T-cell (primary cell): ENCODE measurements at regions of chr12 and their contacts with region 1.

Region 1: DNA sequence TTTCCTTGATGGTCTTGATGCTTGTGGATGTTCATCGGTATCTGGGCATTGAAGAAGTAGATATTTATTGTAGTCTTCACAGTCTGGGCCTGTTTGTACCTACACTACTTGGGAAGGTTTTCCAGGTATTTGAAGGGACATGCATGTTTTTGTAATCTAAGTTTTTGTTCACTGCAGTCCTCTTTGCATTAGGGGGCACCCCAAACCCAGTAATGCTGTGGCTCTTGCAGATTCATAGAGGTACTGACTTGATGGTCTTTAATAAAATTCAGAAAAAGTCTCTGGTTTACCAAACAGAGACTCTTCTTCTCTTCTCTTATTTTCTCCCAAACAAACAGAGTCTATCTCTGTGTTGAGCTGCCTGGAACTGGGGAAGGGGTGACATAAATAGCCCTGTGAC is 150.9 kb upstream of the SLC16A7 start:
- DNase-seq: peak in 17 of 35 experiments; percentile 2 to 43 (median 10)
- ATAC-seq: no peak
- H3K4me3 ChIP-seq: no peak overlapping the region
- H3K4me3 Mint-ChIP-seq: no peak overlapping the region
- H3K27ac ChIP-seq: no peak overlapping the region
- H3K27ac Mint-ChIP-seq: no peak overlapping the region
- H3K4me1 ChIP-seq: no peaks in the 10 kb centered on the region
- H3K4me1 Mint-ChIP-seq: no peaks in the 10 kb centered on the region
- H3K27me3 ChIP-seq: no peaks in the 10 kb centered on the region
- H3K27me3 Mint-ChIP-seq: peaks cover 1 to 10% of the 10 kb centered on the region in 2 donors

Region 2: DNA sequence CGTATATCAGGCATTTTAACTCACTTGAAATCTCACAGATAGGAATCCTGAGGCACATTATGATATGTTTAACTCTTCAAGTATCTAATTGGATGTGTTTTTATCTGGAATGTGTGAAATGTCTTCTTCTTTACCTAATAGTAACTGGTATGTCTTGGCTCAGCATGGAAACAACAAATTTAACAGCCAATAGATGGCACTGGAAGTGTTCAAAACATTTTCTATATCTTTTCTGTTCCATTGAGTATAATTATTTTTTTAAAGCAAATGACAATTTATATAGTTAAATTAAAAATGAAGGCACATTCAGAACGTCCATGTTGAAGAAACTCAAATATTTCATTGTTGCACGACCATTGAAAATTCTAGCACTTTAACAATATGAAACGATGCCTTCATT is 13.7 kb before region 1 on chr12:
- CTCF ChIA-PET with region 1: no interaction called
- POLR2A ChIA-PET with region 1: no interaction called
- DNase-seq: peak in 1 of 35 experiments; percentile 11
- ATAC-seq: no peak
- H3K4me3 ChIP-seq: no peak overlapping the region
- H3K4me3 Mint-ChIP-seq: no peak overlapping the region
- H3K27ac ChIP-seq: no peak overlapping the region
- H3K27ac Mint-ChIP-seq: no peak overlapping the region
- H3K4me1 ChIP-seq: no peaks in the 10 kb centered on the region
- H3K4me1 Mint-ChIP-seq: no peaks in the 10 kb centered on the region
- H3K27me3 ChIP-seq: no peaks in the 10 kb centered on the region
- H3K27me3 Mint-ChIP-seq: no peaks in the 10 kb centered on the region

Region 3: DNA sequence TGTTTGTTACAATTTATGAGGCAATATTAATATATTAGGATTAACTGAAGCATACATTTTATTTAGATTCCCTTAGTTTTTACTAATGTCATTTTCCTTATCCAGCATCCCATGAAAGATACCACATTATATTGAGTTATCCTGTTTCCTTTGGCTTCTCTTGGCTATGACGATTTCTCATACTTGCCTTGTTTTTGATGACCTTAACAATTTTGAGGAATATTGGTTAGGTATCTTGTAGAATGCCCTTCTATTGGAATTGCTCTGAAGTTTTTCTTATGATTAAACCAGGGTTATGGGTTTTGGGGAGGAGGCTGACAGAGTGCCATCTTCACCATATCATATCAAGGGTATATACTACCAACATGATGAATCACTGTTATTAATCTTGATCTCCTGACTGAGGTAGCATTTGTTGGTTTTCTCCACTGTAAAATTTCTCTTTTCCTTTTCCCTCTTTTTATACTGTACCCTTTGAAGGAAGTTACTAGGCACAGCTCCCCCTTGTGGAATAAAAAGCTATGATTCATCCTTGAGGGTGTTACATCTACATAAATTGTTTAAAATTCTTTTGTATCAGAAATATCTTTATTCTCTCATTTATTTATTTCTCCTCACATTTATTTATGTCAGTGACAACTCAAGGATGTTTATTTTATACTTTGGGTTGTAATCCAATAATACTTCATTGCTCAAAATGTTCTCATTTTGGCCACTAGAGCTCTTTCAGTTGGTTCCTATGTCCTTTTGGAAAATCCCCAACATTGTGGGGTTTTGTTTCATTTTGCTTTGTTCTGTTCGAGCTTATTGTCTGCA is 389.9 kb after region 1 on chr12:
- CTCF ChIA-PET with region 1: interaction called, 3 to 10 read pairs
- POLR2A ChIA-PET with region 1: no interaction called
- DNase-seq: peak in 1 of 35 experiments; percentile 48
- ATAC-seq: no peak
- H3K4me3 ChIP-seq: no peak overlapping the region
- H3K4me3 Mint-ChIP-seq: no peak overlapping the region
- H3K27ac ChIP-seq: no peak overlapping the region
- H3K27ac Mint-ChIP-seq: no peak overlapping the region
- H3K4me1 ChIP-seq: no peaks in the 10 kb centered on the region
- H3K4me1 Mint-ChIP-seq: no peaks in the 10 kb centered on the region
- H3K27me3 ChIP-seq: no peaks in the 10 kb centered on the region
- H3K27me3 Mint-ChIP-seq: peaks cover 0 to 7% of the 10 kb centered on the region in 2 donors